Vagina (tissue), 2 donors: ENCODE measurements at regions of chr16 and their contacts with region 1.

Region 1: GRCh38 chr16:67464565-67464964 is 16.4 kb downstream of the ATP6V0D1 start:
- DNase-seq: no peak
- H3K4me3 ChIP-seq: no peak overlapping the region
- H3K27ac ChIP-seq: peak overlapping the region; percentile 66
- H3K4me1 ChIP-seq: peaks cover 77% of the 10 kb centered on the region
- H3K27me3 ChIP-seq: no peaks in the 10 kb centered on the region
- CTCF ChIP-seq: no peak
- POLR2A ChIP-seq: no peak

Region 2: DNA sequence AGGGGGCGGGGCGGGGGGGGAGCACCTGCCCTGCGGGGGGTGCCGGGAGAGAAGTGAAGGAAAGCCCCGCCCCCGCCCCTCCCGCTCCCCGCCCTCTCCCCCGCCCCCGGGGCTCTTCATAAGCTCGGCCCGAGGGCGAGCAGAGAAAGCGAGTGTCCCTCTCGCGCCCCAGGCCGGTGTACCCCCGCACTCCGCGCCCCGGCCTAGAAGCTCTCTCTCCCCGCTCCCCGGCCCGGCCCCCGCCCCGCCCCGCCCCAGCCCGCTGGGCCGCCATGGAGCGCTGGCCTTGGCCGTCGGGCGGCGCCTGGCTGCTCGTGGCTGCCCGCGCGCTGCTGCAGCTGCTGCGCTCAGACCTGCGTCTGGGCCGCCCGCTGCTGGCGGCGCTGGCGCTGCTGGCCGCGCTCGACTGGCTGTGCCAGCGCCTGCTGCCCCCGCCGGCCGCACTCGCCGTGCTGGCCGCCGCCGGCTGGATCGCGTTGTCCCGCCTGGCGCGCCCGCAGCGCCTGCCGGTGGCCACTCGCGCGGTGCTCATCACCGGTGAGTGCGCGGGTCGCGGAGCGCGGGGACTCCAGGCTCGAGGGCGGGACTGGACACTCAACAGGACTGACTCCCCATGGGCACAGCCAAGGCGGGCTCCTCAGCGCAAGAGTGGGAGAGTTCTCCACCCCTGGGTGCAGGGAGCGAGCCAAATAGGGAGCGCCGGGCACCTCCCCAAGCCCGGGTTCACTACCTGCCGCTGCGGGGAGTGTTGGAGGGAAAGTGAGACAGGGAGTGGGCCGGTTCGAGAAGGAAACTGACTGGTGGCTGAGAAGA is 33.4 kb before region 1 on chr16 and contains the start of gene HSD11B2:
- intact Hi-C with region 1: loop called (anchors 2 kb)
- DNase-seq: no peak
- H3K4me3 ChIP-seq: peak within 1 kb of the TSS; percentile 49 to 54
- H3K27ac ChIP-seq: peak within 1 kb of the TSS; percentile 78
- H3K4me1 ChIP-seq: peaks cover 67% of the 10 kb centered on the region
- H3K27me3 ChIP-seq: no peaks in the 10 kb centered on the region
- CTCF ChIP-seq: no peak
- POLR2A ChIP-seq: no peak
- total RNA-seq, gene HSD11B2: 30.2 TPM

Region 3: GRCh38 chr16:67521095-67521804 is 56.7 kb after region 1 on chr16:
- intact Hi-C with region 1: no loop called
- DNase-seq: peak in 1 of 2 donors; percentile 94
- H3K4me3 ChIP-seq: peak overlapping the region; percentile 45 to 55
- H3K27ac ChIP-seq: peak overlapping the region; percentile 98
- H3K4me1 ChIP-seq: peaks cover 8% of the 10 kb centered on the region
- H3K27me3 ChIP-seq: no peaks in the 10 kb centered on the region
- CTCF ChIP-seq: peak; percentile 79 to 96 (median 86)
- POLR2A ChIP-seq: no peak

Region 4: DNA sequence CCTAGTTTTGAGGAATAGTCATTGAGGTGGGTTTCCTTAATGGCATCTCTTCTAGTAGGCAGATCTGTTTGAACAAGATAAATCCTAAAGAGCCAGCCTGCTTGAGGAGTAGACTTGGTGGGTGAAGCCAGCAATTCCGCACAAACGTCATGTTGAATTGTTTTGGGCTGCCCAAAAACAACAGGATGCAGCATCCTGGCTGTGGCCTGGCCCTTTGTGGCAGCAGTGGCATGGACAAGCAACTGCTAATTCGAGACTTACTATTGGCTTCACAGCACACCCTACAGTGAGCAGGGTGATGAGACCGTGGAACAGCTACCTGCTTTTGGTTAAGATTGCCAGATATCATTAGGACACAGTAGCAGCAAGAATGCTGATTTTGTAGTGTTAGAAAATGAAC is 1837.3 kb after region 1 on chr16:
- intact Hi-C with region 1: no loop called
- DNase-seq: peak in 1 of 2 donors; percentile 32
- H3K4me3 ChIP-seq: no peak overlapping the region
- H3K27ac ChIP-seq: no peak overlapping the region
- H3K4me1 ChIP-seq: no peaks in the 10 kb centered on the region
- H3K27me3 ChIP-seq: no peaks in the 10 kb centered on the region
- CTCF ChIP-seq: no peak
- POLR2A ChIP-seq: no peak